Activated CD4-positive, alpha-beta memory T cell treated with anti-CD3 and anti-CD28 coated beads for 36 hours (primary cell): ENCODE measurements at regions of chr1 and their contacts with region 1.

Region 1: GRCh38 chr1:32773018-32773763 is 44.0 kb downstream of the YARS1 start:
- DNase-seq: peak; percentile 83
- H3K4me3 Mint-ChIP-seq: no peak overlapping the region
- H3K27ac Mint-ChIP-seq: peak overlapping the region; percentile 39
- H3K4me1 Mint-ChIP-seq: peaks cover 10% of the 10 kb centered on the region
- H3K27me3 Mint-ChIP-seq: no peaks in the 10 kb centered on the region

Region 2: GRCh38 chr1:31923901-31924535 is 849.2 kb before region 1 on chr1:
- CTCF ChIA-PET with region 1: no interaction called
- POLR2A ChIA-PET with region 1: no interaction called
- intact Hi-C with region 1: no loop called
- DNase-seq: no peak
- H3K4me3 Mint-ChIP-seq: peak overlapping the region; percentile 46
- H3K27ac Mint-ChIP-seq: peak overlapping the region; percentile 77
- H3K4me1 Mint-ChIP-seq: peaks cover 79% of the 10 kb centered on the region
- H3K27me3 Mint-ChIP-seq: no peaks in the 10 kb centered on the region

Region 3: DNA sequence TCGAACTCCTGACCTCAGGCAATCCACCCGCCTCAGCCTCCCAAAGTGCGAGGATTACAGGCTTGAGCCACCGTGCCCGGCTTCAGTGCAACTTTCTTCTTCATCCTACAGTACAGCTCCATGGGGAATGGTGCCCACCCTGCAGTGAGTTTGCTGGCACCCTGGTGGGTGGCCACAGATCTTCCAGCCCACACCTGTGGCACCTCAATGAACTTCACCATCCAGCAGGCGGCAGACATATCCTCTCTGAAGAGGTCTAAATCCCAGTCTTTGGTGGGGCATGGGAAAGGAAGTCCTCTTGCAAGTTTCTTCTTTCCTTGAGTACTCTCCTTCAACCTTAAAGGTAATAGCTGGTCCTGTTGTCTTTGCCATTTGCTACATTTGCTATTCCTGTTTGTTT is 252.0 kb before region 1 on chr1:
- CTCF ChIA-PET with region 1: interaction called, 40 read pairs
- POLR2A ChIA-PET with region 1: interaction called, 5 read pairs
- intact Hi-C with region 1: loop called (anchors 2 kb)
- DNase-seq: no peak
- H3K4me3 Mint-ChIP-seq: peak overlapping the region; percentile 64
- H3K27ac Mint-ChIP-seq: no peak overlapping the region
- H3K4me1 Mint-ChIP-seq: peaks cover 6% of the 10 kb centered on the region
- H3K27me3 Mint-ChIP-seq: peaks cover 7% of the 10 kb centered on the region

Region 4: GRCh38 chr1:32706491-32706890 is 66.7 kb before region 1 on chr1:
- CTCF ChIA-PET with region 1: interaction called, 221 read pairs
- POLR2A ChIA-PET with region 1: no interaction called
- intact Hi-C with region 1: no loop called
- DNase-seq: no peak
- H3K4me3 Mint-ChIP-seq: no peak overlapping the region
- H3K27ac Mint-ChIP-seq: no peak overlapping the region
- H3K4me1 Mint-ChIP-seq: peaks cover 9% of the 10 kb centered on the region
- H3K27me3 Mint-ChIP-seq: peaks cover 29% of the 10 kb centered on the region

Region 5: GRCh38 chr1:32729254-32730046 is 43.7 kb before region 1 on chr1:
- CTCF ChIA-PET with region 1: interaction called, 17 read pairs
- POLR2A ChIA-PET with region 1: no interaction called
- intact Hi-C with region 1: no loop called
- DNase-seq: no peak
- H3K4me3 Mint-ChIP-seq: no peak overlapping the region
- H3K27ac Mint-ChIP-seq: no peak overlapping the region
- H3K4me1 Mint-ChIP-seq: peaks cover 13% of the 10 kb centered on the region
- H3K27me3 Mint-ChIP-seq: peaks cover 2% of the 10 kb centered on the region

Region 6: DNA sequence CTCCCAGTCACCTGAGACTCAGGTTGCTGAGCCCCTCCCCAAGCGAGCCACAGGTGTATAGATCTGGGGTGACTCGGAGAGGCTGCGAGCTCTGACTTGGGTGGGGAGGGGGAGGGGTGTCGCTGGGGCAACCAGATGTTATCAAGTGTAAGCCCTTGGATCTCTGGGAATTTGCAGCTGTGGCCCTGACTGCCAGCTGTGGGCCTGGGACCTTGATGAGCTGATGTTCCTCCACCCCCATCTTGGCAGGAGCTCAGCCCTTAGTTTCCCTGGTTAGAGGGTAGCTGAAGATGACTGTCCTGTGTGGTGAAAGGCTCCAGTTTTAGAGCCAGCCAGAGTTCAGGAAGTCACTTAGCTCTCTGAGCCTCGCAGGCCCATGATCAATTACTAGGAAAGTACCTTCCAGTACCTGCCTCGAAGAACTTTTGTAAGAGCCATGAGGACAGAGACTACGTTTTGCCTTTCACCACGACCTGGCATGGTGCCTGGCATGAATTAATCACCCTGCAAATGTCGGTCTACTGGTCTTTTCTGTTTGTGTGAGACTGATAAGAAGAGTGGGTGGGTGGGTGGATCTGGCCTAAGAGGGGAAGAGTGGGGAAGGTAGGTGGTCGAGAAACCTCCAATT is 11.8 kb before region 1 on chr1:
- CTCF ChIA-PET with region 1: interaction called, 21 read pairs
- POLR2A ChIA-PET with region 1: no interaction called
- intact Hi-C with region 1: no loop called
- DNase-seq: peak; percentile 75
- H3K4me3 Mint-ChIP-seq: no peak overlapping the region
- H3K27ac Mint-ChIP-seq: peak overlapping the region; percentile 44
- H3K4me1 Mint-ChIP-seq: peaks cover 27% of the 10 kb centered on the region
- H3K27me3 Mint-ChIP-seq: no peaks in the 10 kb centered on the region